A673 (cell line): ENCODE measurements at regions of chr4 and their contacts with region 1.

Region 1: DNA sequence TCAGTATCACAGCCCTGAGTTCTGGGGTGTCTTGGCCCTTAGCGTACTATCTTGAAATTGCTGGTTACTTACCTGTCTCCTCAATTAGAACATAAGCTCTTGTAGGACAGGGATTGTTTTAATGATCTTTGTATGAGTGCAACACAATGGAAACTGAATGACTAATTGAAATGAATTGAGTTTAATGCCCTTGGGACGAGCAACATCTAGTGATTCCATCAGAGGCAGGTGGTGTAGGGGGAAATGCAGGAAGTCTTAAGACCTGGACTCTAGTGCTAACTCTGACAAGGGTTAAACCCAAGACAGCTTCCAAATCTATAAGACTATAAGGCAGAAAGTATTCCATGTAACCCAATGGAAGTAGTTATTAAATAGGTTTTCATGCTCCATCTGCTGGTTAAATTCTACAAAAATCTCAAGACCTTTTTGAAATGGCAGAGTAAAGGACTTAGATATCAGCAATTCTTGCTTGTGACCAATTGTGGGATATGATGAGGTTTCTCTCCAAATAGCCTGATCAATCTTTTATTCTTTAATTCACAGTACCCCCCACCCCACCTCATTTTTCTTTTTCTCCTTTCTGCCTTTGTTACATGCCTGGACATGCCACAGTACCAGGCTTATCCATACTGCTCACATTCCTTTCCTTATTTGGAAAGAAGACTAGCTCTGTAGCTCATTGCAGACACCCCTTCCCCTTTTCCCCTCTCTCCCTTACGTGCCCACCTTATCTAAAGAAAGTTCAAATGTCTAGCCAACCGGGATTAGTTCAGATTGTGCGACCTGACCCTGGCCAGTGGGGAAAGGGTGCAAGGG is 340.8 kb downstream of the PAPSS1 start:
- DNase-seq: peak; percentile 81
- H3K4me3 ChIP-seq: no peak overlapping the region
- H3K27ac ChIP-seq: peak overlapping the region; percentile 44
- H3K4me1 ChIP-seq: peaks cover 41% of the 10 kb centered on the region
- H3K27me3 ChIP-seq: no peaks in the 10 kb centered on the region
- CTCF ChIP-seq: peak; percentile 58

Region 2: GRCh38 chr4:106266201-106266600 is 1113.1 kb before region 1 on chr4:
- CTCF ChIA-PET with region 1: no interaction called
- POLR2A ChIA-PET with region 1: no interaction called
- intact Hi-C with region 1: loop called (anchors 5 kb)
- DNase-seq: peak; percentile 79
- H3K4me3 ChIP-seq: no peak overlapping the region
- H3K27ac ChIP-seq: no peak overlapping the region
- H3K4me1 ChIP-seq: peaks cover 13% of the 10 kb centered on the region
- H3K27me3 ChIP-seq: no peaks in the 10 kb centered on the region
- CTCF ChIP-seq: peak; percentile 72

Region 3: GRCh38 chr4:107094332-107094731 is 284.9 kb before region 1 on chr4:
- CTCF ChIA-PET with region 1: no interaction called
- POLR2A ChIA-PET with region 1: no interaction called
- intact Hi-C with region 1: loop called (anchors 1 kb)
- DNase-seq: peak; percentile 82
- H3K4me3 ChIP-seq: no peak overlapping the region
- H3K27ac ChIP-seq: peak overlapping the region; percentile 71
- H3K4me1 ChIP-seq: peaks cover 20% of the 10 kb centered on the region
- H3K27me3 ChIP-seq: no peaks in the 10 kb centered on the region
- CTCF ChIP-seq: peak; percentile 69

Region 4: GRCh38 chr4:107164962-107165475 is 214.2 kb before region 1 on chr4:
- CTCF ChIA-PET with region 1: no interaction called
- POLR2A ChIA-PET with region 1: no interaction called
- intact Hi-C with region 1: loop called (anchors 5 kb)
- DNase-seq: peak; percentile 96
- H3K4me3 ChIP-seq: no peak overlapping the region
- H3K27ac ChIP-seq: peak overlapping the region; percentile 98
- H3K4me1 ChIP-seq: peaks cover 34% of the 10 kb centered on the region
- H3K27me3 ChIP-seq: no peaks in the 10 kb centered on the region
- CTCF ChIP-seq: no peak

Region 5: GRCh38 chr4:107183155-107183774 is 196.0 kb before region 1 on chr4:
- CTCF ChIA-PET with region 1: interaction called, 4 read pairs
- POLR2A ChIA-PET with region 1: no interaction called
- intact Hi-C with region 1: loop called (anchors 1 kb)
- DNase-seq: peak; percentile 88
- H3K4me3 ChIP-seq: no peak overlapping the region
- H3K27ac ChIP-seq: peak overlapping the region; percentile 32
- H3K4me1 ChIP-seq: peaks cover 23% of the 10 kb centered on the region
- H3K27me3 ChIP-seq: no peaks in the 10 kb centered on the region
- CTCF ChIP-seq: peak; percentile 87

Region 6: GRCh38 chr4:107666134-107666533 is 286.9 kb after region 1 on chr4:
- CTCF ChIA-PET with region 1: no interaction called
- POLR2A ChIA-PET with region 1: no interaction called
- intact Hi-C with region 1: loop called (anchors 10 kb)
- DNase-seq: peak; percentile 54
- H3K4me3 ChIP-seq: no peak overlapping the region
- H3K27ac ChIP-seq: no peak overlapping the region
- H3K4me1 ChIP-seq: peaks cover 9% of the 10 kb centered on the region
- H3K27me3 ChIP-seq: no peaks in the 10 kb centered on the region
- CTCF ChIP-seq: peak; percentile 52

Region 7: GRCh38 chr4:107736924-107737448 is 357.7 kb after region 1 on chr4:
- CTCF ChIA-PET with region 1: no interaction called
- POLR2A ChIA-PET with region 1: no interaction called
- intact Hi-C with region 1: loop called (anchors 10 kb)
- DNase-seq: peak; percentile 69
- H3K4me3 ChIP-seq: no peak overlapping the region
- H3K27ac ChIP-seq: no peak overlapping the region
- H3K4me1 ChIP-seq: peaks cover 37% of the 10 kb centered on the region
- H3K27me3 ChIP-seq: no peaks in the 10 kb centered on the region
- CTCF ChIP-seq: peak; percentile 88